HCT116 (cell line): ENCODE measurements at regions of chr12 and their contacts with region 1.

Region 1: GRCh38 chr12:69879041-69879960 is 54.3 kb downstream of the MYRFL start:
- DNase-seq: peak; percentile 59
- ATAC-seq: peak; percentile 96
- H3K4me3 ChIP-seq: peak overlapping the region; percentile 18 to 50
- H3K27ac ChIP-seq: no peak overlapping the region
- H3K4me1 ChIP-seq: peaks cover 0 to 8% of the 10 kb centered on the region in 2 experiments; a peak in 2 of 4 replicates
- H3K27me3 ChIP-seq: no peaks in the 10 kb centered on the region
- CTCF ChIP-seq: peak; percentile 79 to 95 (median 79)
- POLR2A ChIP-seq: no peak
- RAD21 ChIP-seq: peak; percentile 96

Region 2: DNA sequence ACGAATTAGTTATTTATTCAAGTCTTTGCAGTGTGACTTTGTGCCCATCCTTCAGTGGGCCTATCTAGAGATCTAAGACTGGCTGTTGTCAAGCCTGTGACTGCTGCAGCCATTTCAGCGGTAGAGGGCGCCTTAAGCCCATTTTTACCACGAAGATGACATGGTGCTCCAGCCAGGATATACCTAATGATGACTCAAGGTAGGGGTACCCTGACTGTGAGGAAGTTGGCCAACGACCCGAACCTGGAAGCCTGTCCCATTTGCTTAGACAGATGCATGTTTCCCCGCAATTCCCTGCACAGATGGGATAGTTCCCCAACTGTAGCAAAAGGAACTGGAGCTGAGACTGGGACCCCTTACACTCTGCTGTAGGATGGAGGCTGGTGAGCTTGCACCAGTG is 99.4 kb before region 1 on chr12:
- CTCF ChIA-PET with region 1: interaction called, 3 read pairs
- POLR2A ChIA-PET with region 1: no interaction called
- RAD21 ChIA-PET with region 1: no interaction called
- intact Hi-C with region 1: loop called (anchors 5 kb)
- DNase-seq: peak; percentile 27
- ATAC-seq: peak; percentile 93
- H3K4me3 ChIP-seq: no peak overlapping the region
- H3K27ac ChIP-seq: no peak overlapping the region
- H3K4me1 ChIP-seq: no peaks in the 10 kb centered on the region
- H3K27me3 ChIP-seq: no peaks in the 10 kb centered on the region
- CTCF ChIP-seq: peak; percentile 34 to 84 (median 75); a peak in 5 of 6 replicates
- POLR2A ChIP-seq: no peak
- RAD21 ChIP-seq: peak; percentile 71

Region 3: GRCh38 chr12:70576346-70577282 is 697.3 kb after region 1 on chr12:
- CTCF ChIA-PET with region 1: interaction called, 21 read pairs
- POLR2A ChIA-PET with region 1: no interaction called
- RAD21 ChIA-PET with region 1: interaction called, 3 to 8 read pairs
- intact Hi-C with region 1: loop called (anchors 1 kb)
- DNase-seq: peak; percentile 66
- ATAC-seq: peak; percentile 90
- H3K4me3 ChIP-seq: no peak overlapping the region
- H3K27ac ChIP-seq: no peak overlapping the region
- H3K4me1 ChIP-seq: no peaks in the 10 kb centered on the region
- H3K27me3 ChIP-seq: no peaks in the 10 kb centered on the region
- CTCF ChIP-seq: peak; percentile 65 to 91 (median 87)
- POLR2A ChIP-seq: no peak
- RAD21 ChIP-seq: peak; percentile 97

Region 4: GRCh38 chr12:70733385-70733784 is 854.1 kb after region 1 on chr12:
- CTCF ChIA-PET with region 1: interaction called, 28 read pairs
- POLR2A ChIA-PET with region 1: no interaction called
- RAD21 ChIA-PET with region 1: interaction called, 3 to 7 read pairs
- intact Hi-C with region 1: loop called (anchors 1 kb)
- DNase-seq: peak; percentile 76
- ATAC-seq: peak; percentile 86
- H3K4me3 ChIP-seq: no peak overlapping the region
- H3K27ac ChIP-seq: no peak overlapping the region
- H3K4me1 ChIP-seq: no peaks in the 10 kb centered on the region
- H3K27me3 ChIP-seq: no peaks in the 10 kb centered on the region
- CTCF ChIP-seq: peak; percentile 66 to 89 (median 70)
- POLR2A ChIP-seq: no peak
- RAD21 ChIP-seq: peak; percentile 92

Region 5: DNA sequence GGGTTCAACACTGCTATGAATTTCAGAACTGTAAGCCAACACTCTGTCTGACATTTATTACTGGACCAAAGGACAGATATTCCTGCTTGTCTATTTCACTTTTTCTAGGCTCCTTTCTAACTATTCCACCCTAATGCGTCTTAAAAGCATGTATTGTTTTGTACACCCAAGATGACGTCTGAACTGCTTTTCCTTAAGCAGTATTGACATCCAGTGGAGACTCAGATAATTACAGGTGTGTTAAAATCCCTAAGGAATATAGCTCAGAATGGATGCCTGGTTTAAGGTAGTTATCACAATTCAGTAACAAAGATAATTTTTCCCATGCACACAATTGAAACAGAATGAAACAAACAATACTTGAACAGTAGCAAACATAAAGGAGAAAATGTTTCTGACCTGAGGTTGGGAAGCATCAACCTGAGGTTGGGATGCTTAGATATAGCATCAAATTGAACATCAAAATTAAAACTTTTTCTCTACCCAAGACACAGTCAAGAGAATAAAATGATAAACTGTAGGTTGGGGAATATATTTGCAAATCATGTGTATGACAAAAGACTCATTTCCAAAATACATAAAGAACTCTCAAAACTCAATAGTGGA is 1135.0 kb after region 1 on chr12:
- CTCF ChIA-PET with region 1: interaction called, 4 read pairs
- POLR2A ChIA-PET with region 1: no interaction called
- RAD21 ChIA-PET with region 1: no interaction called
- intact Hi-C with region 1: loop called (anchors 5 kb)
- DNase-seq: peak; percentile 51
- ATAC-seq: peak; percentile 83
- H3K4me3 ChIP-seq: no peak overlapping the region
- H3K27ac ChIP-seq: no peak overlapping the region
- H3K4me1 ChIP-seq: peaks cover 0 to 5% of the 10 kb centered on the region in 2 experiments; a peak in 1 of 4 replicates
- H3K27me3 ChIP-seq: no peaks in the 10 kb centered on the region
- CTCF ChIP-seq: peak; percentile 34 to 75 (median 68); a peak in 4 of 6 replicates
- POLR2A ChIP-seq: no peak
- RAD21 ChIP-seq: peak; percentile 90